Activated CD4-positive, alpha-beta T cell treated with anti-CD3 and anti-CD28 coated beads, Interleukin-2, amount 10 ng/mL, durations not matched to agents 24 days and 14 days (primary cell): ENCODE measurements at regions of chr20 and their contacts with region 1.

Region 1: GRCh38 chr20:19056909-19057308 is 155.5 kb upstream of the SLC24A3 start:
- DNase-seq: peak; percentile 59
- H3K4me3 Mint-ChIP-seq: no peak overlapping the region
- H3K27ac Mint-ChIP-seq: no peak overlapping the region
- H3K4me1 Mint-ChIP-seq: no peaks in the 10 kb centered on the region
- H3K27me3 Mint-ChIP-seq: no peaks in the 10 kb centered on the region

Region 2: GRCh38 chr20:18412221-18412901 is 644.5 kb before region 1 on chr20:
- intact Hi-C with region 1: loop called (anchors 5 kb)
- DNase-seq: no peak
- H3K4me3 Mint-ChIP-seq: no peak overlapping the region
- H3K27ac Mint-ChIP-seq: no peak overlapping the region
- H3K4me1 Mint-ChIP-seq: peaks cover 5% of the 10 kb centered on the region
- H3K27me3 Mint-ChIP-seq: no peaks in the 10 kb centered on the region

Region 3: GRCh38 chr20:19015351-19016139 is 41.4 kb before region 1 on chr20:
- intact Hi-C with region 1: no loop called
- DNase-seq: no peak
- H3K4me3 Mint-ChIP-seq: no peak overlapping the region
- H3K27ac Mint-ChIP-seq: no peak overlapping the region
- H3K4me1 Mint-ChIP-seq: no peaks in the 10 kb centered on the region
- H3K27me3 Mint-ChIP-seq: no peaks in the 10 kb centered on the region